GM23248 (cell line): ENCODE measurements at regions of chr12 and their contacts with region 1.

Region 1: DNA sequence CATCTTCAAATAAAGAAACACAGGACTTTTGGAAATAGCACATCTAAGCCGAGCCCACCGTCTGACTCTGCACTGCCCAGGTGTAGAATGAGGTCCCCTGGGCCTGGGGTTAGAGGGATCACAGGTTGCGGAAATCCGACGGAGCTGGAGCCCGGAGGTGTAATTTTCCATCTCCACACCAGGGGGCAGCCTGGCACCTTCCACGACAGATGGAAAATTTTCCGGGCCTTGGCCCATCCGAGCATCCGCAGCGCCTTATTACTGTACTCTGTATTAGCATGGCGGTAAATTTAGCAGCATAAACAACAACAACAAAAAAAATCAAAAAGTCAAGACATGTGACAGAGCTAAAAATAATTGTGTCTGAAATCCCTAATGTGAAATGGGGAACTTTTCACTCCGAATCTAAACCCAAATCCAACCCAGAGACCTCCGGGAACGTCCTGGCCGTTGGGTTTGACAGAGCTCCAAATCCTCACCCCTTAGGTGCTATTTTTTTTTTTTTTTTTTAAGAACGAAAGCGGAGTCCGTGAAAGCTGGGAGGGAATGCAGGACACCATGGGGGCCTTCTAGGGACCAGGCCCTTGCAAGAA is 93.9 kb downstream of the KSR2 start:
- DNase-seq: peak; percentile 86
- H3K4me3 ChIP-seq: no peak overlapping the region
- H3K27ac ChIP-seq: no peak overlapping the region
- H3K4me1 ChIP-seq: no peaks in the 10 kb centered on the region
- H3K27me3 ChIP-seq: no peaks in the 10 kb centered on the region

Region 2: GRCh38 chr12:117699575-117699974 is 175.4 kb before region 1 on chr12:
- in situ Hi-C with region 1: no loop called
- DNase-seq: no peak
- H3K4me3 ChIP-seq: no peak overlapping the region
- H3K27ac ChIP-seq: no peak overlapping the region
- H3K4me1 ChIP-seq: no peaks in the 10 kb centered on the region
- H3K27me3 ChIP-seq: no peaks in the 10 kb centered on the region

Region 3: GRCh38 chr12:118023301-118023860 is 148.4 kb after region 1 on chr12:
- in situ Hi-C with region 1: loop called (anchors 10 kb)
- DNase-seq: no peak
- H3K4me3 ChIP-seq: no peak overlapping the region
- H3K27ac ChIP-seq: no peak overlapping the region
- H3K4me1 ChIP-seq: no peaks in the 10 kb centered on the region
- H3K27me3 ChIP-seq: no peaks in the 10 kb centered on the region

Region 4: DNA sequence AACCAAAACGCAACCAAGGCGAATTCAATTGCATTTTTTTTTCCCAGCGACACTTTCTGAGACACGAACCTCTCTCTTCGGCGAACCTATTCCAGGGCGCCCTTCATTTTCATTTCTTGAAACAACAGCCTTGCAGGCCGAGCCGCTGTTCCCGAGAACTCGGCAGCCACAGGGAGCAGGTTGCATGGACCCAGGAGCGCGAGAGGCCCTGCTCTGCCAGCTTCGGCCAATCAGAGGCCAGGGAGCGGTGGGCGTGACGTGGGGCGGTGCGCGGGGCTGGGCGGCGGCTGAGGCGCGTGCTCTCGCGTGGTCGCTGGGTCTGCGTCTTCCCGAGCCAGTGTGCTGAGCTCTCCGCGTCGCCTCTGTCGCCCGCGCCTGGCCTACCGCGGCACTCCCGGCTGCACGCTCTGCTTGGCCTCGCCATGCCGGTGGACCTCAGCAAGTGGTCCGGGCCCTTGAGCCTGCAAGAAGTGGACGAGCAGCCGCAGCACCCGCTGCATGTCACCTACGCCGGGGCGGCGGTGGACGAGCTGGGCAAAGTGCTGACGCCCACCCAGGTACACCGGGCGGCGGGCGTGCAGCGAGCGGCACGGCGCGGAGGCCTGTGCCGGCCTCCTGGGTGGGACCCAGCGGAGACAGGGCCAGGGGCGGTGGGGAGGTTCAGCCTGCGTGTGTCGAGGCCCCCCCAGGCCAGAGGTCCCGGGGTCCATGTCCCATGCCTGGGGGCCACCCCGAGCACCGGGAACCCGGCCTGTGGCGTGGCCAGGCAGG is 261.0 kb after region 1 on chr12 and contains the start of gene PEBP1:
- in situ Hi-C with region 1: loop called (anchors 25 kb)
- DNase-seq: peak; percentile 96
- H3K4me3 ChIP-seq: peak within 1 kb of the TSS; percentile 77
- H3K27ac ChIP-seq: peak within 1 kb of the TSS; percentile 59
- H3K4me1 ChIP-seq: peaks cover 9% of the 10 kb centered on the region; the same call in 1 of the 2 replicates
- H3K27me3 ChIP-seq: no peaks in the 10 kb centered on the region
- total RNA-seq, gene PEBP1: 217 and 267 TPM in 2 replicates